ENCODE measurements at regions of chr11 and their contacts with region 1.

Region 1: GRCh38 chr11:108647701-108648527 is 17.0 kb upstream of the DDX10 start:
- DNase-seq: peak; percentile 38
- H3K4me3 ChIP-seq: no peak overlapping the region
- CTCF ChIP-seq: peak; percentile 83

Region 2: DNA sequence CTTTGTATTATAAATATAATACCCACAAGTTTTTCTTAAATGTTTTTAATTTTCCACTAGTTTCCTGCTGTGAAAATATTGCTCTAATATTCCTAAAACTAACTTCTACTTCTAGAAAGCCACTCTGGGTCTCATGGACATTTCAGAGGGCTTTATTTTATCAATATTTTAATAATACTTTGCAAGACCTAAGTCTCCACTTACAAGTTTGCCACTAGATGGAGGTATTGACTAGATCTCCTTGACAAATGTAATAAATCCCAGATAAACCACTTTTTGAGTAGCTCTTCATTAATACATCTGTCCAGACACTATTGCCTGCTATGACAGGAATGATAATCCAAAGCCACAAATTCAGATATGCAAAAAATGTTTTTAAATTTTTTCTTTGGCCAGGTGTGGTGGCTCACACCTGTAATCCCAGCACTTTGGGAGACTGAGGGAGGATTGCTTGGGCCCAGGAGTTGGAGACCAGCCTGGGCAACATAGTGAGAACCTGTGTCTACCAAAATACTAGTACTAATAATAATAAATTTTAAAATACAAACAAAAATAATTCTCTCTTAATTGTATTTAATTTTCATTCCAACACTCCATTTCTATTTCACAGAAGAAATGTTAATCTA is 530.1 kb before region 1 on chr11:
- CTCF ChIA-PET with region 1: interaction called, 83 read pairs
- POLR2A ChIA-PET with region 1: no interaction called
- DNase-seq: no peak
- H3K4me3 ChIP-seq: no peak overlapping the region
- CTCF ChIP-seq: peak; percentile 41

Region 3: DNA sequence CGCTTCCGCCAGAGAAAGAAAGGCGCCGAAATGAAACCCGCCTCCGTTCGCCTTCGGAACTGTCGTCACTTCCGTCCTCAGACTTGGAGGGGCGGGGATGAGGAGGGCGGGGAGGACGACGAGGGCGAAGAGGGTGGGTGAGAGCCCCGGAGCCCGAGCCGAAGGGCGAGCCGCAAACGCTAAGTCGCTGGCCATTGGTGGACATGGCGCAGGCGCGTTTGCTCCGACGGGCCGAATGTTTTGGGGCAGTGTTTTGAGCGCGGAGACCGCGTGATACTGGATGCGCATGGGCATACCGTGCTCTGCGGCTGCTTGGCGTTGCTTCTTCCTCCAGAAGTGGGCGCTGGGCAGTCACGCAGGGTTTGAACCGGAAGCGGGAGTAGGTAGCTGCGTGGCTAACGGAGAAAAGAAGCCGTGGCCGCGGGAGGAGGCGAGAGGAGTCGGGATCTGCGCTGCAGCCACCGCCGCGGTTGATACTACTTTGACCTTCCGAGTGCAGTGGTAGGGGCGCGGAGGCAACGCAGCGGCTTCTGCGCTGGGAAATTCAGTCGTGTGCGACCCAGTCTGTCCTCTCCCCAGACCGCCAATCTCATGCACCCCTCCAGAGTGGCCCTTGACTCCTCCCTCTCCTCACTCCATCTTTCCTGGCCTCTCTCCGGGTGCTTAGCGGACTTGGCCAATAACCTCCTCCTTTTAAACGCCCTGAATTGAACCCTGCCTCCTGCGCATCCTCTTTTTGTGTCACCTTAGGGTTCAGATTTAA is 425.0 kb before region 1 on chr11 and contains the start of gene ATM:
- CTCF ChIA-PET with region 1: interaction called, 13 read pairs
- POLR2A ChIA-PET with region 1: no interaction called
- DNase-seq: peak; percentile 93
- H3K4me3 ChIP-seq: peak within 1 kb of the TSS; percentile 90
- CTCF ChIP-seq: peak; percentile 94

Region 4: DNA sequence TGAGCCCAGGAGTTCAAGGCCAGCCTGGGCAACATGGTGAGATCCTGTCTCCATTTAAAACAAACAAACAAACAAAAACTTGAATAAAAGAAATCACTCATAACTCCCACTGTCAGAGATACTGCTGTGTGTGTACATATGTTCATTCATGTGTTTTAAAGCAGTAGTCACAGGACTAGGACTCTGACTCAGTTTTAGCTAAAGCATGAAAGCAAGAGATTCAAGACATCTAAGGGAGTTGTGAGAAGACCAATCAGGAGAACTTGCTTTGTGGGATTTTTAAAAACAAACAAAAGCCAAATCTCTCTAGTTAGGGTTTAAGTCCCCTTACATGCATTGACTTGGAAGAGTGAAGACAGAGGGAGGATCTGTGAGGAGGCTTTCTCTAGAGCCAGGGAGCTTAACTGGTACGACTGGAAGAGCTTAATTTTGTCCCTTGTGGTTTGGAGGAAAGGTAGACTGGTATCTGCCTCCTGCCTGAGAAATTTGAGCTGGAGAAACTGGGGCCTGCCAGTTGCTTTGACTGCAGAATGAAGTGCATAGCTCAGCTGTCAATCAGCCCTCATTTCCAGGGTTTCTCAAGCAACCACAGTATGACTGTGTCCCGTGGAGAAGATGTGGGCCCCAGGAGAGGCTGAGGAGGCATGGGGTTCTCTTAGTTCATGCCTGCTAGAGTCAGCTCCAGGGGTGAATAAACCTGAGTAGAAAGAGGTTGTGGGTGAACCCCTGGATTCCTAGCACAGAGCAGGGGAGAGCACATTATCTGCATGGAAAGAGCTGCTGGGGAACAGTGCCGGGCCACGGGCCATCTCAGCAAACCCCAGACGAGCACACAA is 85.0 kb before region 1 on chr11:
- CTCF ChIA-PET with region 1: no interaction called
- POLR2A ChIA-PET with region 1: no interaction called
- DNase-seq: no peak
- H3K4me3 ChIP-seq: no peak overlapping the region
- CTCF ChIP-seq: no peak

Region 5: GRCh38 chr11:108620958-108621772 is 26.7 kb before region 1 on chr11:
- CTCF ChIA-PET with region 1: no interaction called
- POLR2A ChIA-PET with region 1: no interaction called
- DNase-seq: no peak
- H3K4me3 ChIP-seq: no peak overlapping the region
- CTCF ChIP-seq: no peak

Region 6: GRCh38 chr11:108664730-108665525 is 17.0 kb after region 1 on chr11 and contains the start of gene DDX10:
- CTCF ChIA-PET with region 1: interaction called, 14 read pairs
- POLR2A ChIA-PET with region 1: no interaction called
- DNase-seq: peak; percentile 82
- H3K4me3 ChIP-seq: peak within 1 kb of the TSS; percentile 79
- CTCF ChIP-seq: peak; percentile 21

Measured in AG04449 (cell line).